ENCODE measurements at regions of chr1 and their contacts with region 1.

Region 1: GRCh38 chr1:33517596-33518250 is 45.3 kb downstream of the ZSCAN20 start:
- DNase-seq: no peak
- ATAC-seq: no peak

Region 2: DNA sequence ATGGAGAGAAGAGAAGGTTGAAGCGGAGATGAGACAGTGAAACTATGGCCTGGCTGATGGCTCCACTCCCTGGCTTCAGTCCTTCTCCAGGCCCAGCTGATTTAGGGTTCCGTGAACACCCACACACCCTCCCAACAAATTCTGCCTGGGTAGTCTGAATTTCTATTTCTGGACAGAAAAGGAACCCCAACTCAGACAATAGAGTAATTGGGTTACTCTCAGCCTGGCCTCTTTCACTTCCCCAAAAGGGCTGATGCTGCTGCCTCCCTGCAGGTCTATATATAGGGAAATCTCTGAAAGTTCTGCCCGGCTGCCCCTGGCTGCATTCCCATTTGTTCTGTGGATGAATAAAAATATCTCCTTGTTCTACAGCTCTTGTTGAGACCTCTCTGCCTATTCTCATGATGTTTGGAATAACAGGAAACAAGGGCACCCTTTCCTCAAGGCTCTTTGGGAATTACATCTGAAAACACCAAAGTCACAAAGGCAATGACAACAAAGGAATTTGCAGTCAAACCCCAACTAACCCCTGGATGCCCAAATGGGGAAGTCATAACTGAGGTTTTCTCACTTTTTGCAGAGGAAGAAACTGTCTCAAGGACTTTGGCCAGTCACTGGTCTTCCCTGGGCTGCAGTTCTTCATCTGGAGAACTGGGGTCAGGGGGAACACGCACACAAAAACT is 56.6 kb before region 1 on chr1:
- intact Hi-C with region 1: no loop called
- DNase-seq: no peak
- ATAC-seq: peak; percentile 80

Region 3: DNA sequence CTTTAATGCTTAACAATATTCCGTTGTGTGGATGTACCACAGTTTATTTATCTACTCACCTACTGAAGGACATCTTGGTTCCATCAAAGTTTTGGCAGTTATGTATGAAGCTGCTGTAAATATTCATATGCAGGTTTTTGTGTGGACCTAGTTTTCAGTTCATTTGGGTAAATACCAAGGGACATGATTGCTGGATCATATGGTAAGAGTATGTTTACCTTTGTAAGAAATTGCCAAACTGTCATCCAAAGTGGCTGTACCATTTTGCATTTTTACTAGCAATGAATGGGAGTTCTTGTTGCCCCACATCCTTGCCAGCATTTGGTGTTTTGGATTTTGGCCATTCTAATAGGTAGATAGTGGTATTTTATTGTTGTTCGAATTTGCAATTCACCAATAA is 35.3 kb before region 1 on chr1:
- intact Hi-C with region 1: loop called (anchors 2 kb)
- DNase-seq: no peak
- ATAC-seq: no peak